Mucosa of descending colon (tissue), 3 donors: ENCODE measurements at regions of chr11 and their contacts with region 1.

Region 1: GRCh38 chr11:130069684-130070108 is at the start of gene APLP2:
- DNase-seq: peak; percentile 99 to 100 (median 99)
- ATAC-seq: peak; percentile 89
- H3K4me3 ChIP-seq: peak within 1 kb of the TSS; percentile 80
- H3K4me1 ChIP-seq: peaks cover 22% of the 10 kb centered on the region
- CTCF ChIP-seq: no peak
- total RNA-seq, gene APLP2: 328 to 406 (median 400) TPM

Region 2: DNA sequence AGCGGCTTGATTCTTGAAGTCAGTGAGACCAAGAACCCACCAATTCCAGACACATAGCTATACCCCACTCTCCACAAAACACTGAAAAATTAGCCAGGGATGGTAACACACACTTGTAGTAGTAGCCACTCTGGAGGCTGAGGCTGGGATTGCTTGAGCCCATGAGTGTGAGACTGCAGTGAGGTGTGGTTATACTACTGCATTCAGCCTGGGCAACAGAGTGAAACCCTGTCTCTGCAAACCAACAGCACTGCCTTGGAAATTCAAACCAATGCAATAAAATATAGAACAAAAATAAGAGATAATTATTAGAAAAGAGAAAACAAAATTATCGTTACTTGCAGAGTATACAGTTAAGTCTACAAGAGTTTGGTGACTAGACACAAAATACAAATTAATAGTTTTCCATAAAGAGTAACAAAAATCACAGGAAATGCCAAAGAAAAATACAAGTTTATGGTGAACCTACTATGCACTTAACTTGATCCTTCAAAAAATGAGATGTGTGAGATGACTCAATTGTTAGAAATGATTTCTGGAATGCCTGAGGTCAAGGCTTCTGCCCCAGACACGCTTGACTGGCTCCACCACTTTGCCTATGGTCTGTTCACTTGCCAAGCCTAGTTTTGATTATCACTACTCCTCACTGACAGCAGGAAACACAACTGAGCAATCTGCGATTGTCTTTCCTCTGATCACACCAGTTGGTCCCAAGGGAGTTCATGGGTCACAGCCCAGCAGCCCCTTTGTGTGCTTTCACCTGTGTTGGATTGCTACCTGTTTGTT is 46.7 kb before region 1 on chr11:
- intact Hi-C with region 1: loop called in 1 of 2 experiments (anchors 10 kb)
- DNase-seq: no peak
- ATAC-seq: no peak
- H3K4me3 ChIP-seq: no peak overlapping the region
- H3K4me1 ChIP-seq: no peaks in the 10 kb centered on the region
- CTCF ChIP-seq: no peak

Region 3: GRCh38 chr11:130124096-130124495 is 54.4 kb after region 1 on chr11:
- intact Hi-C with region 1: loop called in 1 of 2 experiments (anchors 10 kb)
- DNase-seq: peak in 1 of 3 donors; percentile 75
- ATAC-seq: peak; percentile 70
- H3K4me3 ChIP-seq: no peak overlapping the region
- H3K4me1 ChIP-seq: no peaks in the 10 kb centered on the region
- CTCF ChIP-seq: no peak